Caco-2 (cell line): ENCODE measurements at regions of chr3 and their contacts with region 1.

Region 1: DNA sequence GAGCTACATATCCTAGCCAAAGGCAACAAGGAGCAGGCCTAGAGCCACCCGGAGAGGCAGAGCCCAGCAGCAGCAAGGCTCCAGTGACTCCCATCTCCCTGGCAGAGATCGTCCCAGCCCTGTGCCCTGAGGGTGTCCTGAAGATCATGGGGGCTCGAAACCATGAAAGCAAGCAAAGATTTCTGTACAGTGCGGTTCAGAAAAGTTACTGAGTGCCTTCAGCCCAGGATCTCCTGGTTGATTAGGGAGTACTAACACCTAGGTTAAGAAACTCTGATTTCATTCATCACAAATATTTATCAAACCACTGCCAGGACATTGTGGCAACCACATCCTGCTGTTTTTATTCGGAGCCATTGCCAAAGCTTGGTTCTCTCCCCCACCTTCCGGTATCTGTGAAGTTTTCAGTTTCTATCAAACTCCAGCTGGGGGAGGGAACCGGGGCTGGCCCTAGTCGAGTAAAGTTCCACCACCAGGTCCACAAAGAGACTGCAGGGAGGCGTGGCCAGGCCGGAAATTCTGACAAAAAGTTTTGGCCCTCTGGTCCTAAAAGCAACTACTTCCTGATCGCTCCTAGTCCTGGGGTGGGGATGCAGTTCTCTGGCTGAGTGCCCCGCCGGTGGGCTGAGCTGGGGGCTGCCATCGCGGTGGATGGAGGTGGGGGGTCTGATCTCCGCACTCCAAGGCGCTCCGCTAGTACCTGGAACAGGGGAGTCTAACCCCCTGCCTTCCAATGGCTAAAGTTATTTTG is 1.2 kb downstream of the RAB43 start:
- DNase-seq: peak; percentile 80 to 81
- H3K4me3 ChIP-seq: peak overlapping the region; percentile 78
- H3K4me3 Mint-ChIP-seq: peak overlapping the region; percentile 80
- H3K27ac Mint-ChIP-seq: peak overlapping the region; percentile 88
- H3K4me1 ChIP-seq: peaks cover 40% of the 10 kb centered on the region
- H3K4me1 Mint-ChIP-seq: peaks cover 36% of the 10 kb centered on the region
- H3K27me3 ChIP-seq: no peaks in the 10 kb centered on the region
- H3K27me3 Mint-ChIP-seq: no peaks in the 10 kb centered on the region
- CTCF ChIP-seq: peak in 1 of 2 experiments; percentile 15

Region 2: DNA sequence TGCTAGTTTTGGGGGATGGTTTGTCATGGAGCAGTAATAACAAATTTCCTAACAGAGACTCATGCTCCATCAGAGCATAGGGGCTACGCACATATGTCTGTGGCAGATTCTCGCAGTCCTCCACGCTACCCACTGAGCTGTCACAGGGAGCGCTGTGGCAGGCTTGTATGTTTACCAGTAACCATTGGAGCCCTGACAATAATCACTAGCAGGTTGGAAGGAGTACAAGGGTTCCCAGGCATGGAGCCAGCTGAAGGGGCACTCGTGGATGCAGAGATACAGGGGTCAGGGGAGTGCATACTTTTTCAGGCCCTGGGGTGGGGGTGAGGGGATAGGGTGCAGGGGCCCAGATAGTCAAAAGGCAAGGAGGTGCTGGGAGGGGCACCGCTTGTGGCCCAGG is 67.8 kb before region 1 on chr3:
- CTCF ChIA-PET with region 1: interaction called, 21 read pairs
- POLR2A ChIA-PET with region 1: interaction called, 3 read pairs
- intact Hi-C with region 1: loop called (anchors 2 kb)
- DNase-seq: no peak
- H3K4me3 ChIP-seq: no peak overlapping the region
- H3K4me3 Mint-ChIP-seq: peak overlapping the region; percentile 40
- H3K27ac Mint-ChIP-seq: peak overlapping the region; percentile 16
- H3K4me1 ChIP-seq: peaks cover 35% of the 10 kb centered on the region
- H3K4me1 Mint-ChIP-seq: peaks cover 16% of the 10 kb centered on the region
- H3K27me3 ChIP-seq: no peaks in the 10 kb centered on the region
- H3K27me3 Mint-ChIP-seq: no peaks in the 10 kb centered on the region
- CTCF ChIP-seq: no peak

Region 3: GRCh38 chr3:129058441-129059200 is 61.8 kb before region 1 on chr3:
- CTCF ChIA-PET with region 1: interaction called, 21 read pairs
- POLR2A ChIA-PET with region 1: interaction called, 3 read pairs
- intact Hi-C with region 1: loop called (anchors 2 kb)
- DNase-seq: no peak
- H3K4me3 ChIP-seq: no peak overlapping the region
- H3K4me3 Mint-ChIP-seq: no peak overlapping the region
- H3K27ac Mint-ChIP-seq: no peak overlapping the region
- H3K4me1 ChIP-seq: peaks cover 30% of the 10 kb centered on the region
- H3K4me1 Mint-ChIP-seq: peaks cover 16% of the 10 kb centered on the region
- H3K27me3 ChIP-seq: no peaks in the 10 kb centered on the region
- H3K27me3 Mint-ChIP-seq: no peaks in the 10 kb centered on the region
- CTCF ChIP-seq: no peak

Region 4: GRCh38 chr3:129160891-129161859 is 40.7 kb after region 1 on chr3 and contains the start of gene ISY1:
- CTCF ChIA-PET with region 1: interaction called, 16 read pairs
- POLR2A ChIA-PET with region 1: interaction called, 3 read pairs
- intact Hi-C with region 1: no loop called
- DNase-seq: peak; percentile 90 to 91
- H3K4me3 ChIP-seq: peak within 1 kb of the TSS; percentile 59
- H3K4me3 Mint-ChIP-seq: peak within 1 kb of the TSS; percentile 89
- H3K27ac Mint-ChIP-seq: peak within 1 kb of the TSS; percentile 99
- H3K4me1 ChIP-seq: peaks cover 15% of the 10 kb centered on the region
- H3K4me1 Mint-ChIP-seq: peaks cover 12% of the 10 kb centered on the region
- H3K27me3 ChIP-seq: no peaks in the 10 kb centered on the region
- H3K27me3 Mint-ChIP-seq: no peaks in the 10 kb centered on the region
- CTCF ChIP-seq: peak; percentile 59 to 87
- total RNA-seq, gene ISY1: 35.6 and 37.6 TPM in 2 replicates

Region 5: GRCh38 chr3:129316131-129317013 is 195.9 kb after region 1 on chr3:
- CTCF ChIA-PET with region 1: no interaction called
- POLR2A ChIA-PET with region 1: no interaction called
- intact Hi-C with region 1: loop called (anchors 10 kb)
- DNase-seq: peak; percentile 89 to 94
- H3K4me3 ChIP-seq: peak overlapping the region; percentile 96
- H3K4me3 Mint-ChIP-seq: peak overlapping the region; percentile 89
- H3K27ac Mint-ChIP-seq: peak overlapping the region; percentile 91
- H3K4me1 ChIP-seq: peaks cover 11% of the 10 kb centered on the region
- H3K4me1 Mint-ChIP-seq: peaks cover 7% of the 10 kb centered on the region
- H3K27me3 ChIP-seq: no peaks in the 10 kb centered on the region
- H3K27me3 Mint-ChIP-seq: no peaks in the 10 kb centered on the region
- CTCF ChIP-seq: peak; percentile 49 to 66